B cell (primary cell): ENCODE measurements at regions of chr5 and their contacts with region 1.

Region 1: GRCh38 chr5:69042915-69043658 is 50.7 kb upstream of the SLC30A5 start:
- DNase-seq: peak; percentile 93
- ATAC-seq: peak; percentile 95
- H3K4me3 ChIP-seq: peak overlapping the region; percentile 43 to 81 (median 63)
- H3K4me3 Mint-ChIP-seq: peak overlapping the region; percentile 90
- H3K27ac ChIP-seq: peak overlapping the region; percentile 51 to 82
- H3K27ac Mint-ChIP-seq: peak overlapping the region; percentile 91
- H3K4me1 ChIP-seq: peaks cover 0 to 4% of the 10 kb centered on the region in 2 donors
- H3K4me1 Mint-ChIP-seq: peaks cover 6% of the 10 kb centered on the region
- H3K27me3 ChIP-seq: no peaks in the 10 kb centered on the region
- H3K27me3 Mint-ChIP-seq: no peaks in the 10 kb centered on the region
- CTCF ChIP-seq: peak; percentile 90

Region 2: DNA sequence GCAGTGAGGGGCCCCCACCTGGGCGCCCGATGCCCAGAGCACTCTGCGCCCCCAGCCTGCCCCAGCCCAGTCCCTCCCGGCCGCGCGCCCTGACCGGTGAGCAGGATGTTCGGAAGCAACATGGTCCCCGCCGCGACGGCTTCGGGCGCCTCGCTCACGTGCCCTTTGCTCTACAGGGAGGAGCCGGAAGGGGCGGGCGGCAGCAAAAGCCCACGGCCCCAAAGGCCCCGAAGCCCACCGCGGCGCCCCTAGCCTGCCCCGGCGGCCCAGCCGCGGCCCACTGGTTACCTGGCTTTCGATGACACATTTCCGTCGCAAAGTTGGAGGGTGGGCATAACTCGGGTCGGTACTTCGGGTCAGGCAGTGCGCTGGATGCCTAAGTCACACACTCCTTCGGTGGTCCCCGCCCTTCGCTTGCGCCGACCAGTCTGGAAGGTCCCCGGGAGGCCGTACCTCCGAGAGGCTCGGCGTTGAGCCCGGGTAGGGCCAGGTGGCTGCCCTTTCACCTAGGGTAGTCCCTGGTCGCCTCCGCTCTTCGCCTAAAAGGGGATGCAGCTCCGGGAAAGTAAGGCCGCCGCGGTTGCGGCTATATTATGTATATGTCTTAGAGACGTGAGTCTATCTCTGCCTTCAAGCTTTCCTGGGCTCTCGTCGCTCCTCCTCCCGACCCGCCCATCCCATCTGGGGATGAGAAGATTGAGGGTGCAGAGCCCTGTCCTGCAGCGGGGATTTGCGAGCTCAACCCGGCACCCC is 326.5 kb after region 1 on chr5 and contains the starts of genes AK6, RAD17 and TAF9:
- CTCF ChIA-PET with region 1: interaction called, 5 read pairs
- POLR2A ChIA-PET with region 1: no interaction called
- intact Hi-C with region 1: loop called (anchors 1 kb)
- DNase-seq: peak; percentile 99
- ATAC-seq: peak; percentile 95
- H3K4me3 ChIP-seq: peak within 1 kb of the TSS; percentile 69 to 89 (median 83)
- H3K4me3 Mint-ChIP-seq: peak within 1 kb of the TSS; percentile 96
- H3K27ac ChIP-seq: peak within 1 kb of the TSS; percentile 96 to 99
- H3K27ac Mint-ChIP-seq: peak within 1 kb of the TSS; percentile 100
- H3K4me1 ChIP-seq: peaks cover 22 to 26% of the 10 kb centered on the region in 2 donors
- H3K4me1 Mint-ChIP-seq: peaks cover 41% of the 10 kb centered on the region
- H3K27me3 ChIP-seq: no peaks in the 10 kb centered on the region
- H3K27me3 Mint-ChIP-seq: no peaks in the 10 kb centered on the region
- CTCF ChIP-seq: no peak
- total RNA-seq, gene AK6: 21.7 and 25.4 TPM in 2 replicates
- total RNA-seq, gene RAD17: 39.6 and 41.0 TPM in 2 replicates
- total RNA-seq, gene TAF9: 41.6 and 42.0 TPM in 2 replicates